A549 (cell line): ENCODE measurements at regions of chr21 and their contacts with region 1.

Region 1: GRCh38 chr21:36203617-36203917 is 46.9 kb downstream of the DOP1B start:
- DNase-seq: peak; percentile 45 to 49
- ATAC-seq: peak; percentile 91 to 94
- H3K4me3 ChIP-seq: no peak overlapping the region
- H3K27ac ChIP-seq: peak overlapping the region; percentile 8 to 76; a peak in 4 of 6 replicates
- H3K4me1 ChIP-seq: peaks cover 28% of the 10 kb centered on the region
- CTCF ChIP-seq: no peak
- EP300 ChIP-seq: no peak
- POLR2A ChIP-seq: no peak
- RAD21 ChIP-seq: no peak

Region 2: GRCh38 chr21:36141513-36141925 is 62.0 kb before region 1 on chr21:
- CTCF ChIA-PET with region 1: interaction called, 75 read pairs
- POLR2A ChIA-PET with region 1: no interaction called
- DNase-seq: peak; percentile 33 to 87
- ATAC-seq: peak; percentile 98
- H3K4me3 ChIP-seq: no peak overlapping the region
- H3K27ac ChIP-seq: no peak overlapping the region
- H3K4me1 ChIP-seq: peaks cover 10% of the 10 kb centered on the region; the same call in 2 of the 3 replicates
- CTCF ChIP-seq: peak; percentile 80
- EP300 ChIP-seq: no peak
- POLR2A ChIP-seq: no peak
- RAD21 ChIP-seq: peak; percentile 79 to 80

Region 3: DNA sequence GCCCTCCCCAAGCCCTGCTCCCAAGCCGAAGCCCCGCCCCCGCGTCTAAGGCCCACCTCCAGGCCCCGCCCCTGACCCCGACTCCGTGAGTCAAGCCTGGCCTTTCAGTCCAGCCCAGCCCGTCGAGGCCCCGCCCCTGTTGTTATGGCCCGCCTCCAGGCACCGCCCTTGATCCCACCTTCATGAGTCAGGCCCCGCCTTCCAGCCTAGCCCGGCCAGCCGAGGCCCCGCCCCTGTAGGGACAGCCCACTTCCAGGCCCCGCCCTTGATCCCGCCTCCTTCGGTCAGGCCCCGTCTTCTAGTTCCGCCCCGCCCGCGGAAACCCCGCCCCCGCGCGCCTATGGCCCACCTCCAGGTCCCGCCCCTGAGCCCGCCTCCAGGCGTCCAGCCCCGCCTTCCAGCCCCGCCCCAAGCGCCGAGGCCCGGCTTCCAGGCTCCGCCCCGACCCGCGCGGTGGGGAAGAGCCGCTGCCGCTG is 47.2 kb before region 1 on chr21:
- CTCF ChIA-PET with region 1: interaction called, 55 read pairs
- POLR2A ChIA-PET with region 1: no interaction called
- DNase-seq: peak; percentile 73 to 98
- ATAC-seq: peak; percentile 89 to 95
- H3K4me3 ChIP-seq: peak overlapping the region; percentile 71
- H3K27ac ChIP-seq: peak overlapping the region in 1 of 2 experiments; percentile 88; a peak in 3 of 6 replicates
- H3K4me1 ChIP-seq: peaks cover 9% of the 10 kb centered on the region; the same call in 1 of the 3 replicates
- CTCF ChIP-seq: no peak
- EP300 ChIP-seq: no peak
- POLR2A ChIP-seq: no peak
- RAD21 ChIP-seq: no peak